ENCODE measurements at regions of chr9 and their contacts with region 1.

Region 1: DNA sequence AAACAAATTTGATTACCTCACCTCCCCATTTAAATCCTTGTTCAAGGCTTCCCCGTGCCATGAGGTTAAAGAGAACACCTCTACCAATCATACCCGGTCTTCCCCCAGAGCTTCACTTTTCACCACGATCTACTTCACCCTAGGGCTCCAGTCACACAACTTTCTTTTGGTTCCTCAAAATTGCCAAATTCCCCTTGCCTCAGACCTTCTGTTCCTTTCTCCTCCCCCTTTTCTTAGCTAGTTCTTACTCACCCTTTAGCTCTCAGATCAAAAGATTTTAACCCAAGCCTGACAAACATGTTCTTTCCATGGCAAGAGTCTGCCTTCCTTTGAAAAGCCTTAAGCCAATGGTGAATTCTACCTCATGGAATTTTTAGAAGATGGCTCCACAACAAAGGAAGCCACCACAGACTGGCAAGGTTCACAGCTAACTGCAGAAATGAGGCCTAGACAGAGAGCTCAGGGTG is 56.7 kb downstream of the MAPKAP1 start:
- DNase-seq: no peak
- H3K4me3 ChIP-seq: no peak overlapping the region
- H3K4me3 Mint-ChIP-seq: no peak overlapping the region
- H3K27ac Mint-ChIP-seq: no peak overlapping the region
- H3K4me1 ChIP-seq: peaks cover 15% of the 10 kb centered on the region
- H3K4me1 Mint-ChIP-seq: no peaks in the 10 kb centered on the region
- H3K27me3 ChIP-seq: no peaks in the 10 kb centered on the region
- H3K27me3 Mint-ChIP-seq: no peaks in the 10 kb centered on the region
- CTCF ChIP-seq: no peak

Region 2: DNA sequence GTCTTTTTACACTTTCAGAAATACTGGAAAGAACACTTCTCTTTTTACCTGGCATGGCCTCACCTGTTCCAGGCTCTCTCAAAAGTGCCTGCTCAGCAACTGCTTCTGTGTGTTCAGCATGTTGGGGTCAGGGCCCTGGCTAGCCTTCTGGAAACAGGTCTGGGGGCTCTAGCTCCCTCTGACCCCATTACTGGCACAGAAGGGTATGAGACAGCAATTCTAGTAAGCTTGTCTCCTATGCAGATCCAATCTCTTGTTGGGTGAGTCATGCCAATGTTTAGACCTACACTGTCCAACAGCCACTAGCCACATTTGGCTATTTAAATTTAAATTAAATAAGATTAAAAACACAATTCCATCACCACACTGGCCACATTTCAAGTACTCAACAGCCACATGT is 24.1 kb before region 1 on chr9:
- CTCF ChIA-PET with region 1: interaction called, 10 read pairs
- POLR2A ChIA-PET with region 1: no interaction called
- intact Hi-C with region 1: no loop called
- DNase-seq: no peak
- H3K4me3 ChIP-seq: no peak overlapping the region
- H3K4me3 Mint-ChIP-seq: no peak overlapping the region
- H3K27ac Mint-ChIP-seq: no peak overlapping the region
- H3K4me1 ChIP-seq: no peaks in the 10 kb centered on the region
- H3K4me1 Mint-ChIP-seq: peaks cover 3% of the 10 kb centered on the region
- H3K27me3 ChIP-seq: no peaks in the 10 kb centered on the region
- H3K27me3 Mint-ChIP-seq: no peaks in the 10 kb centered on the region
- CTCF ChIP-seq: no peak

Region 3: DNA sequence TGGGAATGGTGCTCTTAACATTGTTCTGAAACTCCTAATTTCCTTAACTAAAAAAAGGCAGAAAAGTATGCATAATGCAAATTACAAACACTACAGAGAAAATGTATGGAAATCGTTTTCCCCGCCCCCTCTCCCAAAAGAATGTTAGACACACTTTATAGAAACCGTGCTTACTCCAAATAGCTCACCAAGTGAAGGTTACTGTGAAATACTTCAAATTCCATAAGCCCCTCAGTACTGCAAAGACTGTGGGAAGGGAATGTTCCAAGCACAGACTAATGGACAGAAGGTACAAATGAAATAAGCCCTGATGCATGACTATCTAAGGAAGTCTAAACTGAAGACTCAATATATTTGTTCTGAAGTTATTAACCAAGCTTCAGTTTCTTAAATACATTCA is 44.2 kb after region 1 on chr9:
- CTCF ChIA-PET with region 1: no interaction called
- POLR2A ChIA-PET with region 1: no interaction called
- intact Hi-C with region 1: no loop called
- DNase-seq: no peak
- H3K4me3 ChIP-seq: no peak overlapping the region
- H3K4me3 Mint-ChIP-seq: no peak overlapping the region
- H3K27ac Mint-ChIP-seq: no peak overlapping the region
- H3K4me1 ChIP-seq: no peaks in the 10 kb centered on the region; the same call in 1 of the 2 replicates
- H3K4me1 Mint-ChIP-seq: no peaks in the 10 kb centered on the region
- H3K27me3 ChIP-seq: no peaks in the 10 kb centered on the region
- H3K27me3 Mint-ChIP-seq: no peaks in the 10 kb centered on the region
- CTCF ChIP-seq: no peak

Measured in Caco-2 (cell line).